ENCODE measurements at regions of chr4 and their contacts with region 1.

Region 1: DNA sequence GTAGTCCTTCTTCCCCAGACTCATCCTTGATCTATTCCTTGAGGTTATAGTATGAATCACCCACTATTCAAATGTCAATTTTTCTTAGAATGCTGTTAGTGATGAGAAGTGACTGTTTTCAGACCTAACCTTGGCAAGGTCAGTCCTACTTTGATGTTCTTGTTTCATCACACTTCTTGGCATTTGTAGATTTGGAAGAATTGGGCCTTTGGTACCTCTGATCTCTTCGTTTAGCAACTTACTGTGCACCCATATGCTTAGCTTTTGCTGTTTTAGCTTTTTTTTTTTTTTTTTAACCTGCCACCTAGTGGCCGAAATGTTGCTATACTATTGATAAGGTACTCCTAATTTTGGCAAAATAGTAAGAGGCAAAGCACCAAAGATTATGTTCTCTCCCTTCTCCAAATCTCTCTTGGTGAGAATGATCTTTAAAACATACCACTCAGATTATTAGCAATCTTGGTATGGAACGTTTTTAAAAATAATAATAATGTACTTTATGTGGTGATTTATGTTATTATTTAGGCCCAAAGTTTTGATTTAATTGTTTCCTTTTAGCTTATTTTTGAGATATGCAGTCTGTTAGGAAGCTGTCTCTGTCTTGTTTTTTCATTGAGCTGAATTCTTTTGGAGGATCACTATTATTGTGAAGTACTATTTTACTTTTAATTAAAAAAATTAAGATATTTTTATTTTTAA is 16.6 kb downstream of the DCK start:
- DNase-seq: peak; percentile 76
- ATAC-seq: peak; percentile 51
- H3K4me3 ChIP-seq: no peak overlapping the region
- H3K4me3 Mint-ChIP-seq: peak overlapping the region; percentile 59
- H3K27ac ChIP-seq: peak overlapping the region in 1 of 2 donors; percentile 93
- H3K27ac Mint-ChIP-seq: peak overlapping the region; percentile 76
- H3K4me1 ChIP-seq: peaks cover 39 to 42% of the 10 kb centered on the region in 2 donors
- H3K4me1 Mint-ChIP-seq: peaks cover 49% of the 10 kb centered on the region
- H3K27me3 ChIP-seq: no peaks in the 10 kb centered on the region
- H3K27me3 Mint-ChIP-seq: no peaks in the 10 kb centered on the region
- CTCF ChIP-seq: peak; percentile 85

Region 2: DNA sequence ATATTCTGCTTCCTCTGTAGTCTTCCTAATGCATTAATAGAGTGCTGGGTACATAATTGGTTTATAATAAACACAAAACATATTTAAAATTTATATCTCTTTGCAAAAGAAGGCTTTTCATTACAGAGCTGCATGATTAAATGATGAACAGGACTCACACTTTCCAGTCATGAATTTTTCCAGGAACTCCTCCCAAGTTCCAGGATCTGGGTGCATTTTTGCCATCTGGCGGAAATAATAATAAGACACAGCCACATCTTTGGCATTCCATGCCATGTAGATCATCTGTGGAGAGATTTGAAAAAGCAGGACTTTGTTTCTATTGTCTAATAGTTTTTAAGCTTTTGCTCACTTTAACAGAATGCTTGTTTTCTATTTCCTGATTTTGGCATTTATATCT is 1209.4 kb before region 1 on chr4:
- CTCF ChIA-PET with region 1: no interaction called
- POLR2A ChIA-PET with region 1: no interaction called
- intact Hi-C with region 1: no loop called
- DNase-seq: no peak
- ATAC-seq: no peak
- H3K4me3 ChIP-seq: no peak overlapping the region
- H3K4me3 Mint-ChIP-seq: no peak overlapping the region
- H3K27ac ChIP-seq: no peak overlapping the region
- H3K27ac Mint-ChIP-seq: no peak overlapping the region
- H3K4me1 ChIP-seq: no peaks in the 10 kb centered on the region
- H3K4me1 Mint-ChIP-seq: no peaks in the 10 kb centered on the region
- H3K27me3 ChIP-seq: no peaks in the 10 kb centered on the region
- H3K27me3 Mint-ChIP-seq: no peaks in the 10 kb centered on the region
- CTCF ChIP-seq: no peak

Region 3: GRCh38 chr4:70601422-70602039 is 408.5 kb before region 1 on chr4:
- CTCF ChIA-PET with region 1: interaction called, 6 read pairs
- POLR2A ChIA-PET with region 1: no interaction called
- intact Hi-C with region 1: loop called (anchors 5 kb)
- DNase-seq: peak; percentile 78
- ATAC-seq: peak; percentile 77
- H3K4me3 ChIP-seq: no peak overlapping the region
- H3K4me3 Mint-ChIP-seq: no peak overlapping the region
- H3K27ac ChIP-seq: no peak overlapping the region
- H3K27ac Mint-ChIP-seq: no peak overlapping the region
- H3K4me1 ChIP-seq: peaks cover 0 to 3% of the 10 kb centered on the region in 2 donors
- H3K4me1 Mint-ChIP-seq: no peaks in the 10 kb centered on the region
- H3K27me3 ChIP-seq: no peaks in the 10 kb centered on the region
- H3K27me3 Mint-ChIP-seq: no peaks in the 10 kb centered on the region
- CTCF ChIP-seq: peak; percentile 90

Region 4: GRCh38 chr4:70839589-70840093 is 170.4 kb before region 1 on chr4 and contains the start of gene GRSF1:
- CTCF ChIA-PET with region 1: interaction called, 9 read pairs
- POLR2A ChIA-PET with region 1: interaction called, 3 read pairs
- intact Hi-C with region 1: loop called (anchors 1 kb)
- DNase-seq: peak; percentile 95
- ATAC-seq: peak; percentile 86
- H3K4me3 ChIP-seq: peak within 1 kb of the TSS; percentile 27 to 79 (median 73)
- H3K4me3 Mint-ChIP-seq: peak within 1 kb of the TSS; percentile 99
- H3K27ac ChIP-seq: peak within 1 kb of the TSS; percentile 62 to 85
- H3K27ac Mint-ChIP-seq: peak within 1 kb of the TSS; percentile 95
- H3K4me1 ChIP-seq: peaks cover 22 to 46% of the 10 kb centered on the region in 2 donors
- H3K4me1 Mint-ChIP-seq: peaks cover 45% of the 10 kb centered on the region
- H3K27me3 ChIP-seq: no peaks in the 10 kb centered on the region
- H3K27me3 Mint-ChIP-seq: no peaks in the 10 kb centered on the region
- CTCF ChIP-seq: no peak
- total RNA-seq, gene GRSF1: 43.2 and 44.2 TPM in 2 replicates

Region 5: GRCh38 chr4:70984589-70984988 is 25.4 kb before region 1 on chr4:
- CTCF ChIA-PET with region 1: interaction called, 245 read pairs
- POLR2A ChIA-PET with region 1: no interaction called
- intact Hi-C with region 1: loop called (anchors 1 kb)
- DNase-seq: peak; percentile 47
- ATAC-seq: no peak
- H3K4me3 ChIP-seq: no peak overlapping the region
- H3K4me3 Mint-ChIP-seq: no peak overlapping the region
- H3K27ac ChIP-seq: no peak overlapping the region
- H3K27ac Mint-ChIP-seq: no peak overlapping the region
- H3K4me1 ChIP-seq: peaks cover 8% of the 10 kb centered on the region in 2 donors
- H3K4me1 Mint-ChIP-seq: peaks cover 8% of the 10 kb centered on the region
- H3K27me3 ChIP-seq: no peaks in the 10 kb centered on the region
- H3K27me3 Mint-ChIP-seq: no peaks in the 10 kb centered on the region
- CTCF ChIP-seq: peak; percentile 79

Region 6: DNA sequence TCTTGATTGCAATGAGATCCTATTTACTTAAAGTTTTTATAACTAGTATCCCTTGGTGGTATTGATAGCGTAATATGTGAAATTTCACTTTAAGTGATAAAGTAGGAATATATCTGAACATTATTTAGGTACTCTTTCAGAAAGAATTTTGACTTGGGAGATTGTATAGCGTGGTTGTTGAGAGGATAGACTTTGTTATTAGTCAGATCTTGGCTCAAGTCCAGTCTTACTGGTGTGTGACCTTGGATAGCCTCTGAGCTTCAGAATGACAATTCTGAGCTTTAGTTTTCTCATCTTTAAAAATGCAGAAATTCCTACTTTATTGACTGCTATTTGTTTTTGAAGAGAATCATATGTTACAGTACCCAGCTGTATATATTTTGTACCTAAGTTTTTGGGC is 16.0 kb after region 1 on chr4:
- CTCF ChIA-PET with region 1: interaction called, 35 read pairs
- POLR2A ChIA-PET with region 1: no interaction called
- intact Hi-C with region 1: no loop called
- DNase-seq: no peak
- ATAC-seq: no peak
- H3K4me3 ChIP-seq: no peak overlapping the region
- H3K4me3 Mint-ChIP-seq: no peak overlapping the region
- H3K27ac ChIP-seq: no peak overlapping the region
- H3K27ac Mint-ChIP-seq: no peak overlapping the region
- H3K4me1 ChIP-seq: no peaks in the 10 kb centered on the region
- H3K4me1 Mint-ChIP-seq: peaks cover 2% of the 10 kb centered on the region
- H3K27me3 ChIP-seq: no peaks in the 10 kb centered on the region
- H3K27me3 Mint-ChIP-seq: no peaks in the 10 kb centered on the region
- CTCF ChIP-seq: no peak